ENCODE measurements at regions of chr10 and their contacts with region 1.

Region 1: GRCh38 chr10:113802997-113803396 is 50.9 kb downstream of the DCLRE1A start:
- DNase-seq: no peak
- H3K4me3 ChIP-seq: no peak overlapping the region
- H3K27ac ChIP-seq: no peak overlapping the region
- H3K4me1 ChIP-seq: peaks cover 35% of the 10 kb centered on the region
- H3K27me3 ChIP-seq: no peaks in the 10 kb centered on the region
- CTCF ChIP-seq: no peak

Region 2: DNA sequence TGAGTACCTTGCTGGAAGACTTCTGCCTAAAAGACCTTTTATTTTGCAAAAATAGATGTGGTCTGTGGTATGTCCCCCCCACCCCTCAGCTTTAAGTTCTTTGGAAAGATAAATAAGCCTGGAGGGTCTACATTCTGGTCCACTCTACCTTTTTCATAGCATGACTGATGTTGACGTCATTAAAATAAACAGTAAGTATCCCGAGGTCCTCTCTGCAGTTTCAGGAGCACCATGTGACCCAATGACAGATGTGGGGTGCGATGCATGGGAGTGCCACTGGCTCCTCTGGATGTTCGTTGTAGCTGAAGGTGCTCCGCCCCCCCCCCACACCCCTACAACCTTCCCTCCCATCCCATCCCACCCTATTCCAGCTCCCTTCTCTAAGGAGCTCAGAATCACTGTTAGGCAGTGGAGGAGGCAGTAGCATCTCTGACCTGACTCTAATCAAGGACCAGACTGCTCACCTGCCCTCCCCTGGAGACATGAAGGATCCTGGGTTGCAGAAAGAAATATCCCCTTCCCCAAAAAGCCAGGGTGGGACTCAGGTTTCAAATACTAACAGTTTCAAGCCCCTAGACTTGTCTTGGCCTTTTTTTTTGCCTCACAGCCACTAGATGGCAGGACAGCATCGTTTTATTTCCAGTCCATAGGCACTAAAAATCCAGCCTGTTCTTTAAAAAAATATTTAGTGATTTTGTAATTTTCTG is 98.2 kb before region 1 on chr10:
- CTCF ChIA-PET with region 1: no interaction called
- POLR2A ChIA-PET with region 1: no interaction called
- intact Hi-C with region 1: loop called (anchors 2 kb)
- DNase-seq: peak; percentile 80
- H3K4me3 ChIP-seq: no peak overlapping the region
- H3K27ac ChIP-seq: peak overlapping the region; percentile 72
- H3K4me1 ChIP-seq: peaks cover 53% of the 10 kb centered on the region
- H3K27me3 ChIP-seq: no peaks in the 10 kb centered on the region
- CTCF ChIP-seq: peak; percentile 83

Region 3: GRCh38 chr10:113820507-113820906 is 17.5 kb after region 1 on chr10:
- CTCF ChIA-PET with region 1: no interaction called
- POLR2A ChIA-PET with region 1: no interaction called
- intact Hi-C with region 1: no loop called
- DNase-seq: no peak
- H3K4me3 ChIP-seq: no peak overlapping the region
- H3K27ac ChIP-seq: no peak overlapping the region
- H3K4me1 ChIP-seq: no peaks in the 10 kb centered on the region
- H3K27me3 ChIP-seq: no peaks in the 10 kb centered on the region
- CTCF ChIP-seq: peak; percentile 50

Region 4: GRCh38 chr10:113854011-113854760 is 51.2 kb after region 1 on chr10 and contains the starts of genes DCLRE1A and NHLRC2:
- CTCF ChIA-PET with region 1: no interaction called
- POLR2A ChIA-PET with region 1: no interaction called
- intact Hi-C with region 1: loop called (anchors 2 kb)
- DNase-seq: peak; percentile 90
- H3K4me3 ChIP-seq: peak within 1 kb of the TSS; percentile 76
- H3K27ac ChIP-seq: peak within 1 kb of the TSS; percentile 99
- H3K4me1 ChIP-seq: peaks cover 27% of the 10 kb centered on the region
- H3K27me3 ChIP-seq: no peaks in the 10 kb centered on the region
- CTCF ChIP-seq: no peak
- total RNA-seq, gene DCLRE1A: 62.4 and 75.6 TPM in 2 replicates
- total RNA-seq, gene NHLRC2: 49.7 and 61.9 TPM in 2 replicates

Region 5: DNA sequence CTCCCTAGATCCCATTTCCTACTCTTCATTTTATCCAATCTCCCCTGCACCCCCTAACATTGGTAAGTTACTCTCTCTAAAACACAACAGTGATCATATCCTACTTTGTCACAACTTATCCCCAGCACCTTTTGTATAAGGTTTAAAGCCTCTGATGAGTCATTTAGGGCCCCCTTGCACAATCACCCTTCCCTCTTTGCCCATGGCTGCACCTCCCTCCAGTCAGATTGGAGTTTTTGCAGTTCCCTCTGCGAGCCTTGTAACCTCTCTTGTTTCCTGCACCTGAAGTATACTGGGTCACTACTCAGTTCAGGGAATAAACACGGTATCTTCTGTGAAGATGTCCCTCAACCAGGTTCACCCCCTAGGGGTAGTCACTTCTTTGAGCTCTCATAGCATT is 184.8 kb after region 1 on chr10:
- CTCF ChIA-PET with region 1: no interaction called
- POLR2A ChIA-PET with region 1: no interaction called
- intact Hi-C with region 1: loop called (anchors 1 kb)
- DNase-seq: no peak
- H3K4me3 ChIP-seq: no peak overlapping the region
- H3K27ac ChIP-seq: peak overlapping the region; percentile 96
- H3K4me1 ChIP-seq: peaks cover 43% of the 10 kb centered on the region
- H3K27me3 ChIP-seq: no peaks in the 10 kb centered on the region
- CTCF ChIP-seq: no peak